Activated T-helper 1 cell treated with anti-CD3 and anti-CD28 coated beads, Interleukin-12 subunit alpha, Interleukin-12 subunit beta, Interleukin-2, Interleukin-4 antibody, amounts not matched to agents 30 ng/mL and 10 ng/mL and 1 ng/mL, durations not matched to agents 14 hours and 24 hours and 36 hours (primary cell): ENCODE measurements at regions of chr11 and their contacts with region 1.

Region 1: DNA sequence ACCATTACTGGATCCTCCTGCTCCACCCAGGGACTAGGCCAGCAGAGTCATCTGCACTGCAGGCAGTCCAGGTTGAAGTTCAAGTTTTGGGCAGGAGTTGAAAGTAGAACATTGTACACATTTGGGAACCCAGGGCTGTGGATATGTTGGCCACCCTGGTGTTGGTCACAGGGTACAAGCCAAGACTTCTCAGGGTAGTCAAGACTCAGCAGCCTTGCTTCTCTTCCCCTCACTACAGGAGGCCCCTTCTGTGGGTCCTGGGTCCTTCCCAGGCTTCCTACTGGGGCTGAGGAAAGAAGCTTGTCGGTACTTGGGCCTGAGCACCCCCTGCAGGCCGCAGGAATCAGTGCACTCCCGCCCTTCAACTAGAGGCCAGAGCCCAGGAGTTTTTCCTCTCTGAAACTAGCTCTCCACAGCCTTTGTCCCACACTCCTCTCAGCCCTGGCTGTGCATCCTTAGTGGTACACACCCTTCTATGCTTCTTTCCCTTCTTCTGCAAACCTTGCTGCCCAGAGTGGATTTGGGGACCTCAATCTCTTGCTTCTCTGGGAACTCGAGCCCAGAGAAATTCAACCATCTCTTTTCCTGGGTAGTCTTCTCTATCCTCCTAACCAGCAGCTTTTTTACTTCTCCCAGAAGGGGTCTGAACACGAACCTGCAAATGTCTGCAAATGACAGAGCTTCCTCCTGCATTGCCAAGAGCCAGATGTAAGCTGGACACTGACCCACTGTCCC is 2.6 kb upstream of the HPX start:
- DNase-seq: peak; percentile 39
- H3K4me3 Mint-ChIP-seq: no peak overlapping the region
- H3K27ac Mint-ChIP-seq: no peak overlapping the region
- H3K4me1 Mint-ChIP-seq: no peaks in the 10 kb centered on the region
- H3K27me3 Mint-ChIP-seq: peaks cover 8% of the 10 kb centered on the region

Region 2: GRCh38 chr11:6377902-6378639 is 65.4 kb before region 1 on chr11:
- intact Hi-C with region 1: loop called (anchors 1 kb)
- DNase-seq: no peak
- H3K4me3 Mint-ChIP-seq: peak overlapping the region; percentile 19
- H3K27ac Mint-ChIP-seq: peak overlapping the region; percentile 44
- H3K4me1 Mint-ChIP-seq: peaks cover 33% of the 10 kb centered on the region
- H3K27me3 Mint-ChIP-seq: peaks cover 4% of the 10 kb centered on the region

Region 3: GRCh38 chr11:6419009-6419631 is 24.3 kb before region 1 on chr11 and contains the start of gene APBB1:
- intact Hi-C with region 1: loop called (anchors 2 kb)
- DNase-seq: peak; percentile 63
- H3K4me3 Mint-ChIP-seq: peak within 1 kb of the TSS; percentile 77
- H3K27ac Mint-ChIP-seq: no peak within 1 kb of the TSS
- H3K4me1 Mint-ChIP-seq: no peaks in the 10 kb centered on the region
- H3K27me3 Mint-ChIP-seq: peaks cover 32% of the 10 kb centered on the region
- total RNA-seq, gene APBB1: 16.5 and 16.8 TPM in 2 replicates

Region 4: DNA sequence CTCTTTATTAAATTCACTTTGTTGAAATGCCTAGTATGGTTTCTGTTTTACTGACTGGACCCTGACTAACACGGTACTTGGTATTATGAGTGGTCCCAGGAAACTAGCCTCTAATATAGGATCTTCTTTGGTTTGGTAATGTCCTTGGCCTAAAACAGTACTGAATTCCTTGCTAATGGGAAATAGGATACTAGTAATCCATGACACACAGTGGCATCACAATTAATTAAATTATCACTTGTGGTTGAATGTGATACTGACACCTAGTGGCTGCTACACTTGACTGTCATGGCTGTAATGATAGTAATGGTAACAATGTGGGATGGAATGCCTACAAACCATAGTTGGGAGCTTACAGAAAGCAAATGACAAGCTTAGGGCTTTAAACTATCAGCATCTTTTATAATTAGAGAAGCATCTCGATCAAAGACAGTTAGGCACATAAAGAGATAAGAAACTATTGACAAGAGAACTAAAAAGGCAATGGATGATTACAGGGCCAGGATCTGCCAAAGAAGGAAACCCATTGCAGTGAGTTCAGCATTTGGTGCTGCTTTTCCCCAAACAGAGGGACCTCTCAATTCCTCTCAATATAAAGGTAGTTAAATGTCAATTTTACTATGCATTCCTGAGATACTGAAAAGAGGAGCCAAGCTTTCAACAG is 62.3 kb after region 1 on chr11:
- intact Hi-C with region 1: loop called (anchors 2 kb)
- DNase-seq: no peak
- H3K4me3 Mint-ChIP-seq: no peak overlapping the region
- H3K27ac Mint-ChIP-seq: no peak overlapping the region
- H3K4me1 Mint-ChIP-seq: no peaks in the 10 kb centered on the region
- H3K27me3 Mint-ChIP-seq: no peaks in the 10 kb centered on the region

Region 5: GRCh38 chr11:6790546-6790945 is 347.1 kb after region 1 on chr11:
- intact Hi-C with region 1: no loop called
- DNase-seq: no peak
- H3K4me3 Mint-ChIP-seq: no peak overlapping the region
- H3K27ac Mint-ChIP-seq: no peak overlapping the region
- H3K4me1 Mint-ChIP-seq: no peaks in the 10 kb centered on the region
- H3K27me3 Mint-ChIP-seq: peaks cover 2% of the 10 kb centered on the region